ENCODE measurements at regions of chr7 and their contacts with region 1.

Region 1: GRCh38 chr7:148962823-148963582 is 65.3 kb downstream of the PDIA4 start:
- DNase-seq: peak; percentile 48
- H3K4me3 Mint-ChIP-seq: peak overlapping the region; percentile 79
- H3K27ac Mint-ChIP-seq: peak overlapping the region; percentile 84
- H3K4me1 Mint-ChIP-seq: peaks cover 23% of the 10 kb centered on the region
- H3K27me3 Mint-ChIP-seq: peaks cover 9% of the 10 kb centered on the region
- CTCF ChIP-seq: peak; percentile 55

Region 2: GRCh38 chr7:148264933-148265557 is 698.0 kb before region 1 on chr7:
- CTCF ChIA-PET with region 1: interaction called, 3 read pairs
- intact Hi-C with region 1: loop called (anchors 2 kb)
- DNase-seq: peak; percentile 17
- H3K4me3 Mint-ChIP-seq: no peak overlapping the region
- H3K27ac Mint-ChIP-seq: no peak overlapping the region
- H3K4me1 Mint-ChIP-seq: peaks cover 10% of the 10 kb centered on the region
- H3K27me3 Mint-ChIP-seq: peaks cover 71% of the 10 kb centered on the region
- CTCF ChIP-seq: peak; percentile 52

Region 3: GRCh38 chr7:148575640-148576411 is 387.2 kb before region 1 on chr7:
- CTCF ChIA-PET with region 1: no interaction called
- intact Hi-C with region 1: loop called (anchors 1 kb)
- DNase-seq: peak; percentile 71
- H3K4me3 Mint-ChIP-seq: no peak overlapping the region
- H3K27ac Mint-ChIP-seq: no peak overlapping the region
- H3K4me1 Mint-ChIP-seq: no peaks in the 10 kb centered on the region
- H3K27me3 Mint-ChIP-seq: no peaks in the 10 kb centered on the region
- CTCF ChIP-seq: peak; percentile 63

Region 4: DNA sequence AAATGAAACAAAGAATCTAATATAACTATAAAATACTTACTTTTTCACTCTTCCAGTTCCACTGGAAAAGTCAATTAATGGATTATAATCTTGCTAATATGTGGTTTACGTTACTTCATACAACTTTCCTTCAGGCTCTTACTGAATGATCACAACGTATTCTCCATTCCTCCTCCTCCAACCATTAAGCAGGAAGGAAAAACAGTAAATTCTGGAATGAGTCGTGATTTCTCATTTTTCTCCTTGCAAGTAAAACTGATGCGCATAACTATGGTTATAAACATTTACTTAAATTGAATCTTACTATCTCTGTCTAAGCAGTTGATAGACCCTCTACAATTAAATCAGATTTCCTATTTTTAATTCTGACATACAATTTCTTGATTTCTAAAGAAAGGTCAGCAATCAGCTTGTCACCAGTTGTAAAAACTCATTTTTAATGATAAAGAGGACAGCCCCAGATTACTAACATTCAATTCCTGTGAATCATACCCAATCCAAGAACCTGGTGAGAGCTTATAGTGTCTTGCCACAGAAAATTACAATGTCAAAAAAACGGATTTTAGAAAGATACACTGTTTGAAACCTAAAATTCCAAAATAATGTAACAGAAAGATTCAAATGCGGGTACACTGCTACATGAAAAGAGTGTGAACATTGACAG is 143.2 kb before region 1 on chr7:
- CTCF ChIA-PET with region 1: no interaction called
- intact Hi-C with region 1: loop called (anchors 5 kb)
- DNase-seq: no peak
- H3K4me3 Mint-ChIP-seq: no peak overlapping the region
- H3K27ac Mint-ChIP-seq: no peak overlapping the region
- H3K4me1 Mint-ChIP-seq: no peaks in the 10 kb centered on the region
- H3K27me3 Mint-ChIP-seq: no peaks in the 10 kb centered on the region
- CTCF ChIP-seq: no peak

Region 5: DNA sequence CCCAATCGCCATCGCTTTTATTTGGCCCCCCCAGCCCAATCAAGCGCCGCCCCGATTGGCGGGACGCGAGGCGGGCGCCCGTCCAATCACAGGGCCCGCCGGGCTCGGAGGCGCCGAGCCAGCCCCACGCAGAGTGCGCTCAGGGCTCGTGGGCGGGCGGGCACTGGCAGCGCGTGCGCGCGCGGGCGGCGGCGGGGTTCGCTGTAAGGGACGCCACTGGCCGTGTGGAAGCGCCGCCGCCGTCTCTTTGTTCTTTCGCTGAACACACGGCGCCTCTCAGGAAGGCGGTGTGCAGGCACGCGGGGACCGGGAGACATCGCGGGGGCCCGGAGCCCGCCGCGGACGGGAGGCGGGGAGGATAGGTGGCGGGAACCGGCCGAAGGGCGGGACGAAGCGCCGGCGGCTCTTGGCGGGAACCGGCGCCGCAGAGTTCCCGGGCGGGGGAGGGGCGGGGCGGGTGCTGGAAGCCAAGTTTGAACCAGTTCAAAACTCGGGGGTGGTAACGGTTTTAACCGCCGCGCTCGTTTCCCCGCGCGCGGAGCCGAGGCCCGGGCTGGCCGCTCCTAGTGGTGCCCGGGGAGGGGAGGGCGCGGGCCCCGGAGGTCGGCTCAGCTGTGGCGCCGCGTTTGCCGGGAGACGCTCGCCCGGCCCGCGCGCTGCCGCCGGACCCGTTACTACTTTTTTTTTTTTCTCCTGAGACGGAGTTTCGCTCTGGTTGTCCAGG is 78.5 kb before region 1 on chr7:
- CTCF ChIA-PET with region 1: interaction called, 4 read pairs
- intact Hi-C with region 1: loop called (anchors 2 kb)
- DNase-seq: peak; percentile 94
- H3K4me3 Mint-ChIP-seq: peak overlapping the region; percentile 88
- H3K27ac Mint-ChIP-seq: peak overlapping the region; percentile 76
- H3K4me1 Mint-ChIP-seq: no peaks in the 10 kb centered on the region
- H3K27me3 Mint-ChIP-seq: no peaks in the 10 kb centered on the region
- CTCF ChIP-seq: no peak

Measured in Calu3 (cell line).